MCF 10A (cell line): ENCODE measurements at regions of chr6 and their contacts with region 1.

Region 1: GRCh38 chr6:53794720-53795253 is at the start of gene LRRC1:
- DNase-seq: peak; percentile 91
- H3K4me3 Mint-ChIP-seq: peak within 1 kb of the TSS; percentile 92
- H3K27ac Mint-ChIP-seq: peak within 1 kb of the TSS; percentile 87
- H3K4me1 Mint-ChIP-seq: peaks cover 29% of the 10 kb centered on the region
- H3K27me3 Mint-ChIP-seq: no peaks in the 10 kb centered on the region
- CTCF ChIP-seq: no peak
- total RNA-seq, gene LRRC1: 16.0 and 18.6 TPM in 2 replicates

Region 2: GRCh38 chr6:53544470-53545308 is 250.1 kb before region 1 on chr6 and contains the start of gene GCLC:
- CTCF ChIA-PET with region 1: interaction called, 3 read pairs
- POLR2A ChIA-PET with region 1: interaction called, 10 read pairs
- intact Hi-C with region 1: no loop called
- DNase-seq: peak; percentile 96
- H3K4me3 Mint-ChIP-seq: peak within 1 kb of the TSS; percentile 93
- H3K27ac Mint-ChIP-seq: peak within 1 kb of the TSS; percentile 66
- H3K4me1 Mint-ChIP-seq: peaks cover 43% of the 10 kb centered on the region
- H3K27me3 Mint-ChIP-seq: no peaks in the 10 kb centered on the region
- CTCF ChIP-seq: peak; percentile 77
- total RNA-seq, gene GCLC: 74.8 and 108 TPM in 2 replicates

Region 3: GRCh38 chr6:53734473-53735299 is 60.1 kb before region 1 on chr6:
- CTCF ChIA-PET with region 1: interaction called, 33 read pairs
- POLR2A ChIA-PET with region 1: interaction called, 174 read pairs
- intact Hi-C with region 1: loop called (anchors 2 kb)
- DNase-seq: peak; percentile 92
- H3K4me3 Mint-ChIP-seq: peak overlapping the region; percentile 44
- H3K27ac Mint-ChIP-seq: peak overlapping the region; percentile 83
- H3K4me1 Mint-ChIP-seq: peaks cover 36% of the 10 kb centered on the region
- H3K27me3 Mint-ChIP-seq: no peaks in the 10 kb centered on the region
- CTCF ChIP-seq: peak; percentile 35

Region 4: DNA sequence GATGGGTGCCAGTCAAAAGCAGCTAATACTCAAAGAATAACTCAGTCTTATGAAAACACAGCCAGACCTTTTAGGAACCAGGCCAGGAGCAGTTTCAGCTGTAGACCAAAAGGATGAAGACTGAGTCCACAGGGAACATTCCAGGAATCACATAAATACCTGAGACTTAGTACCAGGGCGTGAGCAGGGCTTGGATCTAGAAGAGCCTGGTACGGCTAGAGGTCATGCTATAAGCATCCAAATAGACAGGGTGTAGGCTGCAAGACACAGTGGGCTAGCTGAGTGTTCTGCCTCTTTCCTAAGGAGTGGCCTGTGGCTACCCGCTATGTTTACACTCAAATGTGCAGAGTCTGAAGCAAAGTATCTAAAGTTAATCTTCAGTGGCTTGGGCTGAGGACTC is 29.5 kb before region 1 on chr6:
- CTCF ChIA-PET with region 1: interaction called, 3 read pairs
- POLR2A ChIA-PET with region 1: interaction called, 26 read pairs
- intact Hi-C with region 1: no loop called
- DNase-seq: no peak
- H3K4me3 Mint-ChIP-seq: no peak overlapping the region
- H3K27ac Mint-ChIP-seq: no peak overlapping the region
- H3K4me1 Mint-ChIP-seq: peaks cover 10% of the 10 kb centered on the region
- H3K27me3 Mint-ChIP-seq: no peaks in the 10 kb centered on the region
- CTCF ChIP-seq: no peak

Region 5: DNA sequence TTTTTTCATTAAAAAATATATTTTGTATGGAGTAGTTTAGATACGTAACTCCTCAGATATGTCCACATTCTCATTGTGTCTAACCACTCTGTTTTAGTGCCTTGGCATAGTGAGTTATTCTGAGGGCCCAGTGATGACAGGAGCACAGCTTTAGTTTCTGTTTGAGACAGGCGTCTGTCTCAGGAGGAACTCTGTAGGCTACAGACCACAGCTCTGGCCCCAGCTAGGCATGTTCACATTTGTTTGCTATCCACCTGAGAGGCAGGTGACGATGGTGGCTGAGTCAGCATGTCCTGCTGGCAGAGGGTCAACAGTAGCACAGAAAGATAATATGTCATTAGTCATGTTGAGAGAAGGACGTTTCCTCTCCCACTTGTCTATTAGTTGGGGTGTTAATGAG is 16.3 kb after region 1 on chr6:
- CTCF ChIA-PET with region 1: interaction called, 15 read pairs
- POLR2A ChIA-PET with region 1: interaction called, 79 read pairs
- intact Hi-C with region 1: no loop called
- DNase-seq: peak; percentile 73
- H3K4me3 Mint-ChIP-seq: peak overlapping the region; percentile 56
- H3K27ac Mint-ChIP-seq: peak overlapping the region; percentile 94
- H3K4me1 Mint-ChIP-seq: peaks cover 41% of the 10 kb centered on the region
- H3K27me3 Mint-ChIP-seq: no peaks in the 10 kb centered on the region
- CTCF ChIP-seq: no peak

Region 6: DNA sequence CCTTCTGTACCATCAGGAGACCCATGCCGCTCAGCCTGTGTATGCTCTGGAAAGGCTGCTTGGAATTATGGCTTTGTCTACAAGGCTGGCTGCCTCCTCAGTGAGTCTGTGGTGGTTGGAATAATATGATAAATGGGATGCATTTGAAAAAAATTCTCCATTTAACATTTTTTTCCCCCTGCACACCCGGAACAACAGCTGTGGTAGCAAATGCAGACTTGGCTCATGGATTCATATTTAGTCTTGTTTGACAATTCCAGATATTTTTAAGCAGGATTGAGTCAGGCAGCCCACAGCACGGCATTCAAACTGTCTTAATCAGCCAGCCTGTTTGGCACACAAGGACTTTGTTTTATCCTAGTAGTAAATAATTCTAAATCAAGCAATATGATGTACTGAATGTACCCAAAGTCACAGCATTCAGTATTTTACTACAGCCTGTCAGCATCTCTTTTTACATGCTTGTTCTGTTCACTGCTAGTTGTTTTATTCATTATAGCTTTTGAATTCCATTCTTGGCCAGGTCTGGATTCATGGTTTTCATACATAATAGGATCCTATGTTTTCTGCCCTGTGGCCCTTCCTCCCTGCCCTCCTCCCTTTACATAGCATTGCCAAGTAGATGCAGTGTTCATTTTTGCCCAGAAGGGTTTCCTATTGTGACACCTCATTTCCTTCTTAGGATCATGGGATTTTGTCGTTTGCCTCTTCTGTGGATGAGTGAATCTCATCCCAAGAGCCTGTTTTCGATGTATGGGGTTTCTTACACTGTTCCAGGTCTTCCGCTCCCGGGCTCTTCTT is 68.1 kb after region 1 on chr6:
- CTCF ChIA-PET with region 1: no interaction called
- POLR2A ChIA-PET with region 1: interaction called, 12 read pairs
- intact Hi-C with region 1: no loop called
- DNase-seq: peak; percentile 70
- H3K4me3 Mint-ChIP-seq: no peak overlapping the region
- H3K27ac Mint-ChIP-seq: no peak overlapping the region
- H3K4me1 Mint-ChIP-seq: peaks cover 32% of the 10 kb centered on the region
- H3K27me3 Mint-ChIP-seq: no peaks in the 10 kb centered on the region
- CTCF ChIP-seq: no peak